IMR-90 (cell line): ENCODE measurements at regions of chr7 and their contacts with region 1.

Region 1: GRCh38 chr7:129343099-129343700 is 91.0 kb upstream of the STRIP2 start:
- DNase-seq: peak; percentile 75
- ATAC-seq: peak; percentile 80
- H3K4me3 ChIP-seq: no peak overlapping the region
- H3K27ac ChIP-seq: no peak overlapping the region
- H3K4me1 ChIP-seq: peaks cover 2% of the 10 kb centered on the region; the same call in 1 of the 2 replicates
- H3K27me3 ChIP-seq: no peaks in the 10 kb centered on the region; the same call in 1 of the 2 replicates
- CTCF ChIP-seq: peak; percentile 77
- POLR2A ChIP-seq: no peak
- RAD21 ChIP-seq: peak; percentile 57

Region 2: GRCh38 chr7:128710481-128710880 is 632.7 kb before region 1 on chr7:
- CTCF ChIA-PET with region 1: no interaction called
- POLR2A ChIA-PET with region 1: no interaction called
- dilution Hi-C with region 1: no loop called
- in situ Hi-C with region 1: no loop called
- intact Hi-C with region 1: no loop called
- DNase-seq: no peak
- ATAC-seq: no peak
- H3K4me3 ChIP-seq: no peak overlapping the region
- H3K27ac ChIP-seq: no peak overlapping the region
- H3K4me1 ChIP-seq: peaks cover 3% of the 10 kb centered on the region; the same call in 1 of the 2 replicates
- H3K27me3 ChIP-seq: peaks cover 7% of the 10 kb centered on the region; the same call in 1 of the 2 replicates
- CTCF ChIP-seq: no peak
- POLR2A ChIP-seq: no peak
- RAD21 ChIP-seq: no peak

Region 3: GRCh38 chr7:129332284-129333035 is 10.7 kb before region 1 on chr7:
- CTCF ChIA-PET with region 1: interaction called, 15 read pairs
- POLR2A ChIA-PET with region 1: no interaction called
- dilution Hi-C with region 1: no loop called
- in situ Hi-C with region 1: no loop called
- intact Hi-C with region 1: no loop called
- DNase-seq: peak; percentile 93
- ATAC-seq: peak; percentile 95
- H3K4me3 ChIP-seq: no peak overlapping the region
- H3K27ac ChIP-seq: peak overlapping the region; percentile 66; the same call in 1 of the 2 replicates
- H3K4me1 ChIP-seq: peaks cover 3% of the 10 kb centered on the region; the same call in 1 of the 2 replicates
- H3K27me3 ChIP-seq: no peaks in the 10 kb centered on the region
- CTCF ChIP-seq: no peak
- POLR2A ChIP-seq: peak; percentile 52; the same call in 1 of the 2 replicates
- RAD21 ChIP-seq: no peak